ENCODE measurements at regions of chr2 and their contacts with region 1.

Region 1: GRCh38 chr2:64685438-64685837 is 31.7 kb upstream of the SERTAD2 start:
- DNase-seq: no peak
- H3K4me3 ChIP-seq: no peak overlapping the region
- H3K27ac ChIP-seq: no peak overlapping the region
- H3K4me1 ChIP-seq: peaks cover 40% of the 10 kb centered on the region
- CTCF ChIP-seq: no peak

Region 2: GRCh38 chr2:64661741-64662169 is 23.7 kb before region 1 on chr2:
- CTCF ChIA-PET with region 1: no interaction called
- POLR2A ChIA-PET with region 1: interaction called, 10 read pairs
- intact Hi-C with region 1: no loop called
- DNase-seq: peak; percentile 74
- H3K4me3 ChIP-seq: peak overlapping the region; percentile 51
- H3K27ac ChIP-seq: peak overlapping the region; percentile 95
- H3K4me1 ChIP-seq: peaks cover 100% of the 10 kb centered on the region
- CTCF ChIP-seq: peak; percentile 75

Region 3: DNA sequence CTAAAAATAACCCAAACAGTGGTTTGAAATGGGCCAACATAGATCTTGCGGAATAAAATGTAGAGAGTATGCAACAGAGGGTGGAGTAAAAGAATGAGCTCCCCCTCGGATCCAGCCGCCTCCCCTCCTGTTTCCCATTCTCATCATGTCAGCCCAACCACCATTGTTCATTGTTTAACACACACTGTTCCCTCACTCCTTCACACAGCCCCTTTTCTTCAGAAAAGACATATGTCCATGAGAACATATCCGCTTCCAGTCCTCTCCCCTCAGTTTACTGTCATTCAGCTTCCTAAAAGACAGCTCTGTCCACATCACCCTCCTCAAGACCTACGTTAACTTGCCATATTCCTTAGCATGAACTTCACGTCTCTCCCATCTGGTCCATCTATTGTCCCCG is 31.1 kb after region 1 on chr2:
- CTCF ChIA-PET with region 1: no interaction called
- POLR2A ChIA-PET with region 1: no interaction called
- intact Hi-C with region 1: no loop called
- DNase-seq: no peak
- H3K4me3 ChIP-seq: no peak overlapping the region
- H3K27ac ChIP-seq: no peak overlapping the region
- H3K4me1 ChIP-seq: peaks cover 6% of the 10 kb centered on the region
- CTCF ChIP-seq: no peak

Measured in OCI-LY7 (cell line).